Upper lobe of right lung (tissue), 1 donor: ENCODE measurements at regions of chr13 and their contacts with region 1.

Region 1: DNA sequence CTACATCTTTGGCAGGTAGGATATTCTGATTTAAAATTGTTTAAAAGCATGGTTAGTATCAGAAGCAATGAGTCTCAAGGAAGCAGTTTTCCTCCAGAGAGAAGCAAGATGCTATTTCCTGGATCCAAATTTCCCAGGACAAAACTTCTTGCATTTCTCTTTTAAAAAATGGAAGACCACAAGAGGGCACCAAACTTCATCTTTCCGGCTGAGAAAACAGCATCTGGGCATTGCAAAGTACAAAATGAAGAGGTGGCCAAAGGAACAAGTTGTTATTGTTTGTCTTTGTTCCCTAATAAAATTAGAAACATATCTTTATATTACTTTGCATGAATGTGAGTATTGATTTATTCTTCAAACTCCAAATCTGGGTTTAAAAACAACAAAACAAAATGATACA is 60.0 kb upstream of the LRCH1 start:
- DNase-seq: no peak
- ATAC-seq: peak; percentile 53
- H3K4me3 ChIP-seq: no peak overlapping the region
- H3K27ac ChIP-seq: no peak overlapping the region
- H3K4me1 ChIP-seq: no peaks in the 10 kb centered on the region
- H3K27me3 ChIP-seq: no peaks in the 10 kb centered on the region
- CTCF ChIP-seq: peak; percentile 67

Region 2: GRCh38 chr13:46339035-46339666 is 153.8 kb before region 1 on chr13:
- intact Hi-C with region 1: no loop called
- DNase-seq: no peak
- ATAC-seq: peak; percentile 68
- H3K4me3 ChIP-seq: no peak overlapping the region
- H3K27ac ChIP-seq: no peak overlapping the region
- H3K4me1 ChIP-seq: peaks cover 9% of the 10 kb centered on the region
- H3K27me3 ChIP-seq: no peaks in the 10 kb centered on the region
- CTCF ChIP-seq: no peak

Region 3: GRCh38 chr13:46721054-46721453 is 228.1 kb after region 1 on chr13:
- intact Hi-C with region 1: loop called (anchors 5 kb)
- DNase-seq: no peak
- ATAC-seq: peak; percentile 68
- H3K4me3 ChIP-seq: no peak overlapping the region
- H3K27ac ChIP-seq: no peak overlapping the region
- H3K4me1 ChIP-seq: no peaks in the 10 kb centered on the region
- H3K27me3 ChIP-seq: no peaks in the 10 kb centered on the region
- CTCF ChIP-seq: peak; percentile 74